ENCODE measurements at regions of chr12 and their contacts with region 1.

Region 1: GRCh38 chr12:124906606-124907261 is 7.7 kb downstream of the UBC start:
- DNase-seq: peak; percentile 77 to 92 (median 83)
- H3K4me3 ChIP-seq: no peak overlapping the region
- H3K4me3 Mint-ChIP-seq: no peak overlapping the region
- H3K27ac ChIP-seq: no peak overlapping the region
- H3K27ac Mint-ChIP-seq: peak overlapping the region in 5 of 8 donors; percentile 7 to 92 (median 63)
- H3K4me1 ChIP-seq: peaks cover 24% of the 10 kb centered on the region
- H3K4me1 Mint-ChIP-seq: peaks cover 26 to 34% (median 33%) of the 10 kb centered on the region in 3 donors
- H3K27me3 ChIP-seq: no peaks in the 10 kb centered on the region
- H3K27me3 Mint-ChIP-seq: no peaks in the 10 kb centered on the region

Region 2: DNA sequence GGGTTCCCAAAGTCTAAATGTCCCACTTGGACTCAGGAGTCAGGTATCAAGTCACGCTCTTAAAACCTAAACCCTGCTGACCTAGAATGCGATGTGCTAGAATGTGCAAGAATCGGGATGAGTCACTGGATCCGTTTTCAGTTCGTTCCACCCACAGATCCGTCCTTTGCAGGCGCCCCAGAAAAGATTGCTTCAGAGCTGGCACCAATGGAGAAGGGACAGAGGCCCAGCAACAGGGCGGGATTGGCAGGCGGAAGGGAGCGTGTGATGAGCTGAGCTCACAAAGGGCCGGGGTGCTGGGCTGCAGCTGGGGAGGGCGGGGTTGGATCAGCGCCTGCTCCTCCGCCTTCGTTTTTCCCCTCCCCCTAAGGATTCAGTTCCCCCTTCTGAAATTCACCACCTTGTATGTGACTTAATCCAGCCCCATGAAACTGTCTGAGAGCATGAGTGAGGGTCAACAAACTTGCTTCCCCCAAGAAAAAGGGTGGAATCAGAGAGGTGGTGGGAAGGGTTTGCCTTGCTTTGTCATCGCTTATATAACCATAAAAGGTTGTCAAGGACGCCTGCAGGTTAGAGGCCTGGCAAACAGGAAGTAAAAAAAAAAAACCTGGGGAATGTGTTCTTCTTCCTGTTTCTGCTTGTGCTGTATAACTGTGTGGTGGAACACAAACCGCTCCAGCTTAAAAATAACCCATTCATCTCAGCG is 10.6 kb after region 1 on chr12:
- CTCF ChIA-PET with region 1: interaction called, 29 read pairs
- POLR2A ChIA-PET with region 1: interaction called, 7 read pairs
- DNase-seq: peak; percentile 90 to 96 (median 93)
- H3K4me3 ChIP-seq: peak overlapping the region; percentile 58
- H3K4me3 Mint-ChIP-seq: peak overlapping the region; percentile 75 to 100 (median 85)
- H3K27ac ChIP-seq: peak overlapping the region; percentile 100
- H3K27ac Mint-ChIP-seq: peak overlapping the region; percentile 85 to 99 (median 96)
- H3K4me1 ChIP-seq: peaks cover 69% of the 10 kb centered on the region
- H3K4me1 Mint-ChIP-seq: peaks cover 87 to 98% (median 93%) of the 10 kb centered on the region in 3 donors
- H3K27me3 ChIP-seq: no peaks in the 10 kb centered on the region
- H3K27me3 Mint-ChIP-seq: peaks cover 0 to 24% of the 10 kb centered on the region in 2 donors

Region 3: DNA sequence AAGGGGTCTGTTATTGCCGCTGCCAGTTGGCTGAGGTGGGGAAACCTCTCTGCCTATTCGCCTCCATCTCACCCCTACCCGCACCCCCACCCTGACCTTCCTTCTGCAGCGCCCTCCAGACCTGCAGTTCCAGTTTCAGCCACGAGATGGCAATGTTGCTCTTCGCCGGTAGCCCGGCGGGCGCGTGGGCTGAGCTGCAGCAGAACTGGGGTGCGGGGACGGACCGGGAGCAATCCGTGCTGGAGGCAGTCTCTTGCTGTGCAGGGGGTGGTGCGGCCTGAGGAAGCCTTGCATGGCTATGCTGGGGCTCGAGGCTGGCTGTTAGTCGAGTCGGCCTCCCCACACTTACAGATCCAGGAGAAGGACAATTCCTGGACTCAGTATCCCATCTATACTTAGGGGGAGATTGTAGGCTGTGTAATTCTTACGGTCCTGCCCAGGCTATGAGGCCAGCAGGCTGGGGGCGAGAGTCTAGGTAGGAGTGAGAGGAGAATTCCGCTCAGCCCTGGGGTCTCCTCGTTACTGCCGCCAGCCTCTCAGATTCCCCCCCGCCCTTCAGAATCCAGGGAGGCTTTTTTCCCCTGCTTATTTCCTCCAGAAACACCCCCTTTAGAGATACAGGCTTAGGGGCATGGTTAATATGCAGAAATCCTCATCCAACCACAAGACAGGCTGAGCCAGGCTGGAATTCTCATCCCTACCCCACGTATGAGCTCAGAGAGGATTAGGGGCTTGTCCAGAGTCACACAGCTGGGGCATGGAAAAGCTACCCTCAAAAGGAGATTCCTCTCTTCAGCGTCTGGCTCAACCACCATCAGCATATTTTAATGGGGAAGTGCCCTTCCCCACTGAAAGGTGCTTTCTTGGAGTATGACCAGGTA is 276.7 kb after region 1 on chr12:
- CTCF ChIA-PET with region 1: no interaction called
- POLR2A ChIA-PET with region 1: no interaction called
- DNase-seq: peak; percentile 48 to 77 (median 56)
- H3K4me3 ChIP-seq: no peak overlapping the region
- H3K4me3 Mint-ChIP-seq: peak overlapping the region in 2 of 7 donors; percentile 18 to 27
- H3K27ac ChIP-seq: no peak overlapping the region
- H3K27ac Mint-ChIP-seq: peak overlapping the region in 2 of 8 donors; percentile 14 to 41
- H3K4me1 ChIP-seq: peaks cover 7% of the 10 kb centered on the region
- H3K4me1 Mint-ChIP-seq: peaks cover 8 to 19% (median 10%) of the 10 kb centered on the region in 3 donors
- H3K27me3 ChIP-seq: peaks cover 24% of the 10 kb centered on the region
- H3K27me3 Mint-ChIP-seq: peaks cover 44 to 63% of the 10 kb centered on the region in 2 donors